Esophagus muscularis mucosa (tissue), 4 donors: ENCODE measurements at regions of chr15 and their contacts with region 1.

Region 1: DNA sequence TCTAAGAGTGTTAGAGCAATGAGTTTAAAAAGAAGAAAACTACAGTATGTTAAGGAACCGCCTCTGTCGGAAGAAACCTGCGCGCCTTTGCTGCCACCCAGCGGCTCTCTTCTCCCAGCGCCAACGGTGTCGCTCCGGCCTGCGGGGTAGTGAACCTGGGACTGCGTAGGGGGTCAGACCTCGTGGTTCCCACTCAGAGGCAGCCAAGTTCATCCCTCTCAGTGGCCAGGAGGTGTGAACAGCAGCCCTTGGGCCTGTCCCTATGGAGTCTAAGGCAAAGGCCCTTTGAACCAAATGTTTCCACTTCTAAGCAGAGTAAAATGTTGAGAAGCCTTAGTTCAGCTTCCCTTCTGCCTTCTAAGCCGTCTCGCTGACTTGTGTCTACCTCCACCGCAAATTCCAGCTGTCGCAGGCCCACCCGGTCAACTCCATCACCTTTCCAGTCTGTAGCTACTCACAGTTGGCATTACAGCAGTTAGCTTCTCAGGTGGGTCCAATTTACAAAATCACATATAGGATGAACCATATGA is 980 bp upstream of the RAB27A start:
- DNase-seq: peak; percentile 95
- H3K4me3 ChIP-seq: peak overlapping the region; percentile 72 to 98 (median 83)
- H3K27ac ChIP-seq: peak overlapping the region; percentile 88 to 98 (median 90)
- H3K4me1 ChIP-seq: peaks cover 8 to 30% (median 18%) of the 10 kb centered on the region in 4 donors
- H3K27me3 ChIP-seq: no peaks in the 10 kb centered on the region
- CTCF ChIP-seq: peak; percentile 87 to 95 (median 92)
- EP300 ChIP-seq: no peak
- POLR2A ChIP-seq: no peak

Region 2: DNA sequence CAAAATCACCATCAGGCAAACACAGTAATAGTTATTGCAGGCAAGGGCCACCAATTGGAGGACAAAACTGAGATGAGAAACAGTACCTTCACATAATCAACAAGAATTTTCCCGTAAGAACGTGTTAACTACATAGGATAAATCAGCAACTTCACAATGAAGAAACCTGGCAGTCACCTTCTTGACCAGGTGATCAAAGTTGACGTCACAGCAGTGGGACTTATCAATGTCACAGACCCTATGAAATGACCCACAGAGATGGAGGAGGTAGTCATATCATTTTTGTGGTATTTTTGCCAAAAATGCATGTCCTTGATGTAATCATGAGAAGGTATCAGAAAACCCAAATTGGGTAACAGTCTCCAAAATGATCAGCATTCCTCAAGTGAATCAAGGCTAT is 412.6 kb before region 1 on chr15:
- intact Hi-C with region 1: no loop called
- DNase-seq: no peak
- H3K4me3 ChIP-seq: no peak overlapping the region
- H3K27ac ChIP-seq: no peak overlapping the region
- H3K4me1 ChIP-seq: no peaks in the 10 kb centered on the region
- H3K27me3 ChIP-seq: no peaks in the 10 kb centered on the region
- CTCF ChIP-seq: no peak
- EP300 ChIP-seq: no peak
- POLR2A ChIP-seq: no peak

Region 3: DNA sequence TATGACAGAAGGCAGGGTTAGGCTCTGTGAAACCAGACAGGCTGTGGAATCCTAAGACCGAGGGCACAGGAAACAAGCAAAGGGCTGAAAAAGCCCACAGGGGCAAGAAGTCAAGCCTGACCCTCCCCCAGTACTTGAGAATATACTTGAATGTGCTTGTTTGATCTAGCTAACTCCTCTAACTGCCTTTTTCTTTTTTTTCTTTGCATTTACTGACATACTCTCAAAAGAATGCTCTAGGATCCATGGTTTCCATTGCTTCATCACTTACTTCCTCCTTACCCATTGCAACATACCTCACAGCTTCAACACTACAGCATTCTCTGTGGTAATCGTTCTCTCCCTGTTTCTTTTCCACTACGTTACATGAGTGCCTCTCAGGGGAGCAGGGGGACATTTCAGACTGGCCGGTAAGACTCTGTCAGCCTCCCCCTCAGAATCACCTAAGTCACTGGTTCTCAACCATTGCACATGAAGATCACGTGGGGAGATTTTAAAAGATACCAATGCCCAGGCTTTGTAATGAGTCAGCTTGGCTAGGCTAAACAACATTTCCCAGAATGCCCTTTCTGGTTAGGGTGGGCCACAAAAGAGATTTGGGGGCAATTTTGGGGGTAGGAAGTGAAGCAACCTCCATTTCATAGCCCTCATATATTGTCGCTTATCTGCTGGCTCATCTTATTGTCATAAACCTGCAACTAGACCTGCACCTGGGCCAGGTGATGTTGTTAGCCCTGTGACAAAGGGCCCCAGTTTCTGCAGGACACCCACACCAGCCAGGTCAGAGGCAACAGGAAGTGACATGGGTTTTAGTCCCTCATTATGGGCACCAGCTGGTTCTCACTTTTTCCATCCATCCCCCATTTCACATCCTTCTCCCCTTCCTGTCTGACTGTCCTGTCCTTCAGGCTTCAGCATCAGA is 69.2 kb before region 1 on chr15:
- intact Hi-C with region 1: loop called (anchors 1 kb)
- DNase-seq: no peak
- H3K4me3 ChIP-seq: no peak overlapping the region
- H3K27ac ChIP-seq: peak overlapping the region in 3 of 4 donors; percentile 27 to 49 (median 38)
- H3K4me1 ChIP-seq: peaks cover 0 to 19% (median 8%) of the 10 kb centered on the region in 4 donors
- H3K27me3 ChIP-seq: no peaks in the 10 kb centered on the region
- CTCF ChIP-seq: no peak
- EP300 ChIP-seq: no peak
- POLR2A ChIP-seq: no peak